CD4-positive, alpha-beta memory T cell (primary cell): ENCODE measurements at regions of chr19 and their contacts with region 1.

Region 1: DNA sequence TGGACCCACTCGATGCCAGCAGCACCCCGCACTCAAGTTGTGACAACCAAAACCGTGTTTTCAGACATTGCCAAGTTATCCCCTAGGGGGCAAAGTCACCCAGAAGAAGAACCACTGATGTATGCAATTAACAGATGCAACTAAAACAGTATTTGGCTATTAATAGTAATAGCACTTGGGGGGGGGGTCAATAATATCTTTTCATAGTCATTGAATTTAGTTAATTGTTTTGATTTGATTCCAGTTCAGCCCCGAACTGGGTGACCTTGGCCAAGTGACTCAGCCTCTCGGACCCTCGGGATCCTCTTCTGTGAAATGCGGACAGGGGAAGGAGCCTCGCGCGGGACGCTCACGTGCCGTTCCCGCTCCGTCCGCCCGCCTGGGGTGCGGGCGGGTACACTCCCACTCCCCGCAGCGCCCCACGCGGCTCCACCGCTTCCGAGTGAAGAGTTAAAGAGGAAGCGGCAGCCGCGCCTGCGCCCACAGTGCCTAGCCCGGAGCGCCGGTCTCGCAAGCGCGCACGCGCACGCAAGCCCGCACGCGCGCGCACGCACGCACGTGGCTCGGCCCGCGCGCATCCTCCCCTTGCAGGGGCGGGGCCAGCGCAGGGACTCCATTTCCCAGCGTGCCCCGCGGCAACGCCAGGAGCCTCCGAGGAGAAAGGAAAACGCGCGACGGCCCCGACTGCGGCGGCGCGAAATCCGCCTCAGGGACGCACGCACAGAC is 449 bp upstream of the DAZAP1 start:
- DNase-seq: peak; percentile 98 to 100 (median 100)
- H3K4me3 ChIP-seq: peak overlapping the region; percentile 33 to 57
- H3K4me3 Mint-ChIP-seq: peak overlapping the region; percentile 73 to 87 (median 82)
- H3K27ac ChIP-seq: peak overlapping the region; percentile 88
- H3K27ac Mint-ChIP-seq: peak overlapping the region; percentile 67 to 86 (median 84)
- H3K4me1 ChIP-seq: peaks cover 43% of the 10 kb centered on the region
- H3K4me1 Mint-ChIP-seq: peaks cover 20 to 48% (median 37%) of the 10 kb centered on the region in 4 donors
- H3K27me3 ChIP-seq: no peaks in the 10 kb centered on the region
- H3K27me3 Mint-ChIP-seq: no peaks in the 10 kb centered on the region

Region 2: GRCh38 chr19:850221-850978 is 556.5 kb before region 1 on chr19:
- CTCF ChIA-PET with region 1: no interaction called
- POLR2A ChIA-PET with region 1: no interaction called
- intact Hi-C with region 1: no loop called
- DNase-seq: no peak
- H3K4me3 ChIP-seq: no peak overlapping the region
- H3K4me3 Mint-ChIP-seq: no peak overlapping the region
- H3K27ac ChIP-seq: no peak overlapping the region
- H3K27ac Mint-ChIP-seq: no peak overlapping the region
- H3K4me1 ChIP-seq: no peaks in the 10 kb centered on the region
- H3K4me1 Mint-ChIP-seq: no peaks in the 10 kb centered on the region
- H3K27me3 ChIP-seq: no peaks in the 10 kb centered on the region
- H3K27me3 Mint-ChIP-seq: peaks cover 12 to 30% of the 10 kb centered on the region in 2 donors

Region 3: DNA sequence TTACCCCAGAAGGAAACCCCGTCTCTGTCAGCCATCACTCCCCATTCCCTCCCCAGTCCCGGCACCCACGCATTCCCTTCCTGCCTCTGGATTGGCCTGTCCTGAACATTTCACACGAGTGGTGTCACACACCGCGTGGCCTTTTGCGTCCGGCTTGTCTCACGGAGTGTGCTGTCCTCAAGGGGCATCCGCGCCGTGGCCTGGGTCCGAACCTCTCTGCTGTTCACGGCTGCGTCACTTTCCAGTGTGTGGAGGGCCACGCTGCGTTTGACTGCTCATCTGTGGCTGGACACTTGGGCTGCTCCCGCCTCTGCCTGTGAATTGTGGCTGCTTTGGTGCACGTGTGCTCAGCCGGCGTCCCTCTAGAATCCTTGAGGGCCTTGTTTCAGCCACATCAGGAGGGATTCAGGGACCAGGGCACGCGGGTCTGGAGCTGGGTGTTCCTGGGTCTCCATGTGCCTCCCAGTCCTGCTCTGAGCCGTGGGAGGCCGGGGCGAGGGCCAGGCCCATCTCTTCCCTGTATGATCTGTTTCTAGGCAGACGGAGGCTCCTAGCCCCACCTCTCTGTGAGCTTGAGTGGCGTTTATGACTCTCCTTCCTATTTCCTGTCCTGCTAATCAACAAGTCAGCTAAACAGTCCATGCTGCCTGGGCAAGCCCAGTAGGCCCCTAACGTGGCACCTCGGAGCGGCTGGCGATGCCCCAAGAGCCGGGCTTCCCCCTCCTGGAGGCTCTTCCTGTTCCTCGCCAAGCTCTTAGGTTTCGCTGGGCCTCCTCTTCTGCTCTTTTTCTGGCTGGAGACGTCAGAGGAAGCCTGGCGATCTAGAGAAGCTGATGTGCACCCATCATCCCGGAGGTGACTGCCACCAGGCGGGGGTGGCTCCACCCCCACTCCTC is 193.3 kb before region 1 on chr19:
- CTCF ChIA-PET with region 1: no interaction called
- POLR2A ChIA-PET with region 1: no interaction called
- intact Hi-C with region 1: no loop called
- DNase-seq: peak; percentile 67 to 87 (median 71)
- H3K4me3 ChIP-seq: peak overlapping the region in 1 of 2 donors; percentile 15
- H3K4me3 Mint-ChIP-seq: peak overlapping the region; percentile 75 to 92 (median 86)
- H3K27ac ChIP-seq: peak overlapping the region; percentile 79
- H3K27ac Mint-ChIP-seq: peak overlapping the region; percentile 94 to 98 (median 97)
- H3K4me1 ChIP-seq: peaks cover 53% of the 10 kb centered on the region
- H3K4me1 Mint-ChIP-seq: peaks cover 20 to 58% (median 29%) of the 10 kb centered on the region in 4 donors
- H3K27me3 ChIP-seq: no peaks in the 10 kb centered on the region
- H3K27me3 Mint-ChIP-seq: no peaks in the 10 kb centered on the region

Region 4: GRCh38 chr19:1249298-1249989 is 157.5 kb before region 1 on chr19:
- CTCF ChIA-PET with region 1: interaction called, 4 read pairs
- POLR2A ChIA-PET with region 1: no interaction called
- intact Hi-C with region 1: loop called (anchors 5 kb)
- DNase-seq: peak; percentile 92 to 97 (median 95)
- H3K4me3 ChIP-seq: peak overlapping the region in 1 of 2 donors; percentile 77
- H3K4me3 Mint-ChIP-seq: peak overlapping the region; percentile 83 to 94 (median 90)
- H3K27ac ChIP-seq: peak overlapping the region; percentile 92
- H3K27ac Mint-ChIP-seq: peak overlapping the region; percentile 89 to 94 (median 91)
- H3K4me1 ChIP-seq: peaks cover 33% of the 10 kb centered on the region
- H3K4me1 Mint-ChIP-seq: peaks cover 2 to 26% (median 9%) of the 10 kb centered on the region in 4 donors
- H3K27me3 ChIP-seq: no peaks in the 10 kb centered on the region
- H3K27me3 Mint-ChIP-seq: no peaks in the 10 kb centered on the region

Region 5: GRCh38 chr19:1383311-1384084 is 23.4 kb before region 1 on chr19 and contains the start of gene NDUFS7:
- CTCF ChIA-PET with region 1: no interaction called
- POLR2A ChIA-PET with region 1: interaction called, 5 read pairs
- intact Hi-C with region 1: loop called (anchors 1 kb)
- DNase-seq: peak; percentile 89 to 98 (median 94)
- H3K4me3 ChIP-seq: peak within 1 kb of the TSS; percentile 81 to 89
- H3K4me3 Mint-ChIP-seq: peak within 1 kb of the TSS; percentile 89 to 98 (median 94)
- H3K27ac ChIP-seq: peak within 1 kb of the TSS; percentile 69
- H3K27ac Mint-ChIP-seq: peak within 1 kb of the TSS; percentile 96 to 100 (median 99)
- H3K4me1 ChIP-seq: peaks cover 16% of the 10 kb centered on the region
- H3K4me1 Mint-ChIP-seq: peaks cover 9 to 29% (median 16%) of the 10 kb centered on the region in 4 donors
- H3K27me3 ChIP-seq: no peaks in the 10 kb centered on the region
- H3K27me3 Mint-ChIP-seq: peaks cover 3 to 5% of the 10 kb centered on the region in 2 donors
- total RNA-seq, gene NDUFS7: 68.6 to 73.5 TPM

Region 6: DNA sequence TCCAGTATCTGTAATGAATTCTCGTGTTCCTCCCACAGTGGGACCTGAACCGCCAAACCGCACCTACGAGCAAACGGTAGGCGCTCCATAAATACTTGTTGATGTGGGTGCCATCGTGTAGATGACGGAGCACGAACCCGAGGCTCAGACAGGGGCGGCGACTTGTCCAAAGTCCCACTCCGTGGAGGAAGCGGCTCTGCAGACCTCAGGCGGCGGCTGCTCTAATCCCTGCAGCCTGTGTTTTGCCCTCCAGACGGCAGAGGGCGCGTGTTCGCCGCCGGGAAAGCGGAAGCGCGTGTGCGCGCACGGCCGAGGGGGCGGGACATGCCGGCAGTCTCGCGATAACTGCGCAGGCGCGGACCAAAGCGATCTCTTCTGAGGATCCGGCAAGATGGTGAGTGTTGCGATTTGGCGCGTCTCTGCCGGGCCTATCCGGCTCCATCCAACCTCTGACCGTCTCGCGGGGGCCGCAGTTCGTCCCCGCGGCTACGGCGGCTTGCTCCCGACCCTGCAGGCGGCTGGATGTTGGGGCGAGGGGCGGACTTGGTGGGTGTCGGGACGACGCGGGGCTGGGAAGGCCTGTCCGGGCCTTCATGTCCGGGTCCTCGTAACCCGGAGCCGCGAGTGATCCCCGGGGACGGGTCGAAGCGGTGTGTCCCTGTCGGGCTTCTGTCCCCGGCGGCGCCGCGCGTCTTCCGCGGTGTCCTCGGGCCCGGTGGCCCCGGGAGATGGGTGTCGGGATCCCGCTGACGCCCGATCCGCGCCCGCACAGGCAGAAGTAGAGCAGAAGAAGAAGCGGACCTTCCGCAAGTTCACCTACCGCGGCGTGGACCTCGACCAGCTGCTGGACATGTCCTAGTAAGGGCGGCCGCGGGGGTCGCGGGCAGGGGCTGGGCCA is 31.3 kb after region 1 on chr19 and contains the start of gene RPS15:
- CTCF ChIA-PET with region 1: interaction called, 9 read pairs
- POLR2A ChIA-PET with region 1: interaction called, 12 read pairs
- intact Hi-C with region 1: loop called (anchors 1 kb)
- DNase-seq: peak; percentile 93 to 97 (median 96)
- H3K4me3 ChIP-seq: peak within 1 kb of the TSS; percentile 47 to 79
- H3K4me3 Mint-ChIP-seq: peak within 1 kb of the TSS; percentile 97 to 99 (median 98)
- H3K27ac ChIP-seq: peak within 1 kb of the TSS; percentile 93
- H3K27ac Mint-ChIP-seq: peak within 1 kb of the TSS; percentile 98 to 99 (median 99)
- H3K4me1 ChIP-seq: peaks cover 29% of the 10 kb centered on the region
- H3K4me1 Mint-ChIP-seq: peaks cover 1 to 38% (median 19%) of the 10 kb centered on the region in 4 donors
- H3K27me3 ChIP-seq: no peaks in the 10 kb centered on the region
- H3K27me3 Mint-ChIP-seq: no peaks in the 10 kb centered on the region
- total RNA-seq, gene RPS15: 1,715 to 1,828 TPM

Region 7: GRCh38 chr19:1605236-1606137 is 198.6 kb after region 1 on chr19 and contains the start of gene UQCR11:
- CTCF ChIA-PET with region 1: no interaction called
- POLR2A ChIA-PET with region 1: no interaction called
- intact Hi-C with region 1: loop called (anchors 2 kb)
- DNase-seq: peak; percentile 87 to 95 (median 91)
- H3K4me3 ChIP-seq: peak within 1 kb of the TSS; percentile 80 to 85
- H3K4me3 Mint-ChIP-seq: peak within 1 kb of the TSS; percentile 94 to 99 (median 96)
- H3K27ac ChIP-seq: peak within 1 kb of the TSS; percentile 94
- H3K27ac Mint-ChIP-seq: peak within 1 kb of the TSS; percentile 98 to 100 (median 99)
- H3K4me1 ChIP-seq: peaks cover 56% of the 10 kb centered on the region
- H3K4me1 Mint-ChIP-seq: peaks cover 20 to 70% (median 47%) of the 10 kb centered on the region in 4 donors
- H3K27me3 ChIP-seq: no peaks in the 10 kb centered on the region
- H3K27me3 Mint-ChIP-seq: no peaks in the 10 kb centered on the region
- total RNA-seq, gene UQCR11: 157 to 158 TPM